AG04449 (cell line): ENCODE measurements at regions of chr1 and their contacts with region 1.

Region 1: GRCh38 chr1:67685067-67685557 is at the start of gene GADD45A:
- DNase-seq: peak; percentile 98
- H3K4me3 ChIP-seq: peak within 1 kb of the TSS; percentile 91
- CTCF ChIP-seq: no peak

Region 2: DNA sequence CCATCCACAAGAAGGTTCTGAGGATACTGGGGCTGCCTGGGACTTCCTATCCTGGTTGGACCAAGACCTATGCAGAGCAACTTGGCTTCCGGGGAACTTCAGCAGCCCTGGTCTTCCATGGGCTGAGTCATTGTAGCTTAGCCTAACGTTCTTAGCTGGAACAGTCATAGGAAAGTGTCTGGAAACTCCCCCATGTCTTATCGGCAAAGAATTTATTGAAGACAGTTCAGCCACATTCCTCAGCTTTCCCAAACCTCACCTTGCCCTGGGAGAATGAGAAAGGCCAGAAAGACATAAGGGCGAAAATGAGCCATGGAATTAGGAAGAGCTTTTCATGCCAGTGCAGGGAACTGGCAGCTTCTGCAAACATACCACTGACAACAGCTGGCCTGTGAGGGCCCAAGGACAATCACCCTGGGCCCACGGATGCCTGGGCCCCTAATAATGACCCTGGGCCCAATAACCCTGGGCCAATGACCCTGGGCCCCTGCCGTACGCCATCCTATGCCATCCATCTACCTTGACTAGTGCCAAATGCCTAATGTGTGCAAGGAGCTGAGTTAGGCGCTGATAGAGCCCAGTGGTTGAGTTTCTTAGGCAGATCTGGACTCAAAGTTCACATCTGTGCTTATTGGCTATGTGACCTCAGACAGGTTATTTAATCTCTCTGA is 114.5 kb before region 1 on chr1:
- CTCF ChIA-PET with region 1: interaction called, 3 read pairs
- POLR2A ChIA-PET with region 1: interaction called, 60 read pairs
- DNase-seq: peak; percentile 86
- H3K4me3 ChIP-seq: no peak overlapping the region
- CTCF ChIP-seq: no peak

Region 3: GRCh38 chr1:67674260-67675011 is 10.7 kb before region 1 on chr1:
- CTCF ChIA-PET with region 1: interaction called, 5 read pairs
- POLR2A ChIA-PET with region 1: interaction called, 14 read pairs
- DNase-seq: no peak
- H3K4me3 ChIP-seq: no peak overlapping the region
- CTCF ChIP-seq: no peak

Region 4: GRCh38 chr1:67753776-67754525 is 68.8 kb after region 1 on chr1:
- CTCF ChIA-PET with region 1: interaction called, 66 read pairs
- POLR2A ChIA-PET with region 1: interaction called, 15 read pairs
- DNase-seq: no peak
- H3K4me3 ChIP-seq: no peak overlapping the region
- CTCF ChIP-seq: no peak